Sigmoid colon (tissue), 7 donors: ENCODE measurements at regions of chr10 and their contacts with region 1.

Region 1: DNA sequence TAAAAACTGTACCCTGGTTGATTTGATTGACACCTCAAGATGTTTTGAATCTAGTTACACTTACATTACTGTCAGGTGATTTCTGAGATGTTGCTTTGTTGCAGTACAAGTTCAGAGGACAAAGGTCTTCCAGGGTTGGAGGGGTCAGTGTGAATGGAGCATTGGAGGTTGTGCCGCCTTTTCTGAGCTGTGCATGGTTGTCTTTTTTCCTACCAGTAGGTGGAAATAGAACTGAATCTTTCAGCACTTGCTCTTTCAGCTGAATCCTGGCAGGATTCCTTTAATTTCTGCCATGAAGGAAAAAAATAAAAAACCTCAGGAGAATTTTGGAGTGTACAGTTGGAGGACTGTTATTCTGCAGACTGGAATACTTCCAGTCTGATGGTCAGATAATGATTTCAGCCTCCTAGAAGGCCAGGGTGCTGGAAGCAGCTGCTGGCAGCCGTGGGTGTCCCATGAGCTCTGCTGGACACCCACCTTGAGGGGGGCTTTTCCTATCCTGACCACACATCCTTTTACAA is 82.7 kb downstream of the PLCE1 start:
- DNase-seq: no peak
- H3K4me3 ChIP-seq: no peak overlapping the region
- H3K27ac ChIP-seq: peak overlapping the region in 3 of 4 donors; percentile 7 to 44 (median 36)
- H3K4me1 ChIP-seq: peaks cover 0 to 22% (median 20%) of the 10 kb centered on the region in 4 donors
- H3K27me3 ChIP-seq: no peaks in the 10 kb centered on the region
- CTCF ChIP-seq: peak in 3 of 4 experiments; percentile 49 to 55 (median 53)
- EP300 ChIP-seq: no peak
- POLR2A ChIP-seq: no peak

Region 2: DNA sequence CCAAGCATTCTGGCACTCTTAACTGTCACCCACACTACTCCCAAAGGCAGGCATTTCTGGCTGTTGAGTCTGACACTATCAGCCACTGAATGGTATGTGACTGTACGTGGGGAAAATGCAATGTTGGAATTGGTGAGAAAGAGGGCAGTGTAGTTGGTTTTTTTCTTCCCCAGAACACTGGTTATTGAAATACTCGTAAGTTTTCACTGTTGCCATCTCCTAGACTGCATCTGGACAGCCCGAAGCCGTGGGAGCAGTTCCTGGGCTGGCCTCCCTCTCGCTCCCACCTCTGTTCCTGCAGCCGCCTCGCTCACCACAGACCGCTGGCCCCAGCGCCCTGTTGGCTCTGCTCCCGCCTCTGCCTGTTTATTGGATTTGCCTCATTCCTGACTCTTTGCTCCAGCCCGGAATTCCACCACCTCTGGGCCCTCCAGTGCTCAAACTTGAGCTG is 77.0 kb before region 1 on chr10:
- intact Hi-C with region 1: loop called (anchors 5 kb)
- DNase-seq: peak; percentile 82
- H3K4me3 ChIP-seq: peak overlapping the region in 2 of 4 donors; percentile 6 to 8
- H3K27ac ChIP-seq: peak overlapping the region; percentile 59 to 75 (median 69)
- H3K4me1 ChIP-seq: peaks cover 0 to 42% (median 16%) of the 10 kb centered on the region in 4 donors
- H3K27me3 ChIP-seq: no peaks in the 10 kb centered on the region
- CTCF ChIP-seq: no peak
- EP300 ChIP-seq: no peak
- POLR2A ChIP-seq: no peak

Region 3: DNA sequence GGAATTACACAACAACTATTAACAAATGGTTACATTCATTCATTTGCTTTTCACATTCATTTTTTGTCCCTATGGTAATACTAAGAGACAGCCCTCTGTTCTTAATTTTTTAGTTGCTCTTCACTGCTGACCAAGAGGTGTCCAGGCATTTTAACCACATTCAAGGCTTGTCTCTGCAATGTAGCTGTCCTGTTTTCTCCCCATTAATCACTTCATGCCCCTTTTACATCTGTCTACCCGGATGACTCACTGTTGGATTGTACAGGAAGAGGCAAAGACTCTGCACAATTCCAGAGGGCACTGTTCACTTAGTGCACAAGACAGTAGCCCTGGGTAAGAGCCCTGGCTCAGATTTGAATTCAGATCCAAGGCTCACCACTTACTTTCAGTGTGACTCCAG is 117.9 kb after region 1 on chr10:
- intact Hi-C with region 1: loop called (anchors 5 kb)
- DNase-seq: no peak
- H3K4me3 ChIP-seq: no peak overlapping the region
- H3K27ac ChIP-seq: peak overlapping the region in 2 of 4 donors; percentile 61 to 62
- H3K4me1 ChIP-seq: peaks cover 0 to 26% (median 19%) of the 10 kb centered on the region in 4 donors
- H3K27me3 ChIP-seq: no peaks in the 10 kb centered on the region
- CTCF ChIP-seq: no peak
- EP300 ChIP-seq: no peak
- POLR2A ChIP-seq: no peak

Region 4: DNA sequence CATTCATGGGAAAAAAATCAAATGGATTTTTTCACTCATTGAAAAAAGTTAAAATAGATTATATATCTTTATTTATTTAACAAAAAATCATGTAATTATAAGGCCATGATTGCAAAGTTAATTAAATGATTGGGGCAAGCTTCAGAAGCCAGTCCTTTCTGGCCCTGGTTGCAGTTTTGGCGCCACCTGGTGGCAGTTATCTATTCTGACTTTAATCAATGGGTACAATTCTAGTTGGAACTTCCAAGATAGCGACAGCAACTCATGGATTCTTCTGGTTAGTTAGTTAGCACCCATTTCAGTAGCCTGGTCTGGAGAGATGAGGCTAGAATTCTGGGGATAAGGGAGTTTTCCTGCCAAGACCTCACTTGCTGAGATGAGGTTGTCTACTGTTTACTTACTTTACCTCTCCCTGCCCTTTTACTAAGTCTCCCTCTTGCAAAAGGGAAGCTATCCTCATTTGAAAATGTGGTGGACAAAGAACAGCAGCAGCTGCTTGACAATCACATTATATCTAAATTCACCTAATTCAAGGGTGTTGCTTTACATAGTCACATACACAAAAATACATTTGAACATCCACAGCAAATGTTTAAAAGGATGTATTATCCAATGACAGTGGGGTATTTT is 244.0 kb after region 1 on chr10:
- intact Hi-C with region 1: loop called (anchors 2 kb)
- DNase-seq: peak; percentile 75
- H3K4me3 ChIP-seq: no peak overlapping the region
- H3K27ac ChIP-seq: no peak overlapping the region
- H3K4me1 ChIP-seq: peaks cover 0 to 15% (median 13%) of the 10 kb centered on the region in 4 donors
- H3K27me3 ChIP-seq: no peaks in the 10 kb centered on the region
- CTCF ChIP-seq: peak; percentile 58 to 85 (median 76)
- EP300 ChIP-seq: no peak
- POLR2A ChIP-seq: no peak